Endothelial cell of umbilical vein (primary cell): ENCODE measurements at regions of chr2 and their contacts with region 1.

Region 1: GRCh38 chr2:112584134-112584890 is at the start of gene CHCHD5:
- DNase-seq: peak; percentile 94
- H3K4me3 ChIP-seq: peak within 1 kb of the TSS; percentile 1 to 78 (median 61)
- H3K27ac ChIP-seq: peak within 1 kb of the TSS; percentile 76
- H3K4me1 ChIP-seq: peaks cover 14% of the 10 kb centered on the region
- H3K27me3 ChIP-seq: no peaks in the 10 kb centered on the region
- CTCF ChIP-seq: no peak
- POLR2A ChIP-seq: peak; percentile 96
- total RNA-seq, gene CHCHD5: 22.2 and 23.6 TPM in 2 replicates

Region 2: GRCh38 chr2:111667542-111668273 is 916.6 kb before region 1 on chr2:
- CTCF ChIA-PET with region 1: no interaction called
- POLR2A ChIA-PET with region 1: no interaction called
- dilution Hi-C with region 1: no loop called
- intact Hi-C with region 1: no loop called
- DNase-seq: peak; percentile 73
- H3K4me3 ChIP-seq: no peak overlapping the region
- H3K27ac ChIP-seq: no peak overlapping the region
- H3K4me1 ChIP-seq: peaks cover 3% of the 10 kb centered on the region
- H3K27me3 ChIP-seq: no peaks in the 10 kb centered on the region
- CTCF ChIP-seq: peak; percentile 37 to 58
- POLR2A ChIP-seq: no peak

Region 3: GRCh38 chr2:111883661-111884591 is 700.4 kb before region 1 on chr2 and contains the start of gene ANAPC1:
- CTCF ChIA-PET with region 1: no interaction called
- POLR2A ChIA-PET with region 1: no interaction called
- dilution Hi-C with region 1: no loop called
- intact Hi-C with region 1: loop called (anchors 5 kb)
- DNase-seq: peak; percentile 87
- H3K4me3 ChIP-seq: peak within 1 kb of the TSS; percentile 90 to 97 (median 96)
- H3K27ac ChIP-seq: peak within 1 kb of the TSS; percentile 66
- H3K4me1 ChIP-seq: peaks cover 7% of the 10 kb centered on the region
- H3K27me3 ChIP-seq: no peaks in the 10 kb centered on the region
- CTCF ChIP-seq: no peak
- POLR2A ChIP-seq: peak; percentile 96
- total RNA-seq, gene ANAPC1: 58.3 and 61.5 TPM in 2 replicates

Region 4: DNA sequence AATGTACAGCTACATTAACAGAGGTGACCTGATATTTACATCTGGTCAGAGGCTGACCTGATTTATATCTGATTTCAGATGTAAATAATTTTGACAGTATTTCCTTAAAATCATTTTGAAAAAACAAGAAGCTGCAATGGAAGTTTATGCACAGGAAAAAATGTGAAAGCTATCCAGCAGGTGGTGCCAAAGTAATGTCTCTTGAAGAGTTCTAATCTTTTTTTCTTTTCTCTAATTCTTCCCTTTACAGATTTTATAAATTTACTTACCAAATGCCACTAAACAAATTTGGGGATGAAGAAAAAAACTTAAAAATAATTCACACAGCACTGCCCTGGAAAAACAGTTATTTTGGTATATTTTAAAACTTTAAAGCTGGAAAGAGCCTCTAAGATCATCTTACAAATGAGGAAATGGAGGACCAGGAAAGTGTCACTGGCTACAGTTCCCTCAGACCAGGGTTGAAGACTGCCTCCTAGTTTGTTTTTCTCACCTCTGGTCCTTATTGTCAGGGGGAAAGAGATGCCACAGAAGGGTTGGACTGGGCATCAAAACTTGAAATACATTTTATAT is 462.5 kb before region 1 on chr2:
- CTCF ChIA-PET with region 1: interaction called, 3 read pairs
- POLR2A ChIA-PET with region 1: no interaction called
- dilution Hi-C with region 1: no loop called
- intact Hi-C with region 1: loop called (anchors 5 kb)
- DNase-seq: peak; percentile 77
- H3K4me3 ChIP-seq: no peak overlapping the region
- H3K27ac ChIP-seq: no peak overlapping the region
- H3K4me1 ChIP-seq: no peaks in the 10 kb centered on the region
- H3K27me3 ChIP-seq: no peaks in the 10 kb centered on the region
- CTCF ChIP-seq: peak; percentile 30 to 49
- POLR2A ChIP-seq: no peak

Region 5: GRCh38 chr2:112481050-112481527 is 103.2 kb before region 1 on chr2:
- CTCF ChIA-PET with region 1: interaction called, 5 read pairs
- POLR2A ChIA-PET with region 1: no interaction called
- dilution Hi-C with region 1: no loop called
- intact Hi-C with region 1: loop called (anchors 1 kb)
- DNase-seq: peak; percentile 85
- H3K4me3 ChIP-seq: peak overlapping the region; percentile 49 to 90 (median 61)
- H3K27ac ChIP-seq: peak overlapping the region; percentile 45
- H3K4me1 ChIP-seq: peaks cover 10% of the 10 kb centered on the region
- H3K27me3 ChIP-seq: no peaks in the 10 kb centered on the region
- CTCF ChIP-seq: peak; percentile 80 to 92
- POLR2A ChIP-seq: no peak

Region 6: GRCh38 chr2:112493858-112494648 is 90.3 kb before region 1 on chr2:
- CTCF ChIA-PET with region 1: no interaction called
- POLR2A ChIA-PET with region 1: no interaction called
- dilution Hi-C with region 1: no loop called
- intact Hi-C with region 1: no loop called
- DNase-seq: peak; percentile 28
- H3K4me3 ChIP-seq: no peak overlapping the region
- H3K27ac ChIP-seq: no peak overlapping the region
- H3K4me1 ChIP-seq: peaks cover 19% of the 10 kb centered on the region
- H3K27me3 ChIP-seq: no peaks in the 10 kb centered on the region
- CTCF ChIP-seq: no peak
- POLR2A ChIP-seq: no peak

Region 7: DNA sequence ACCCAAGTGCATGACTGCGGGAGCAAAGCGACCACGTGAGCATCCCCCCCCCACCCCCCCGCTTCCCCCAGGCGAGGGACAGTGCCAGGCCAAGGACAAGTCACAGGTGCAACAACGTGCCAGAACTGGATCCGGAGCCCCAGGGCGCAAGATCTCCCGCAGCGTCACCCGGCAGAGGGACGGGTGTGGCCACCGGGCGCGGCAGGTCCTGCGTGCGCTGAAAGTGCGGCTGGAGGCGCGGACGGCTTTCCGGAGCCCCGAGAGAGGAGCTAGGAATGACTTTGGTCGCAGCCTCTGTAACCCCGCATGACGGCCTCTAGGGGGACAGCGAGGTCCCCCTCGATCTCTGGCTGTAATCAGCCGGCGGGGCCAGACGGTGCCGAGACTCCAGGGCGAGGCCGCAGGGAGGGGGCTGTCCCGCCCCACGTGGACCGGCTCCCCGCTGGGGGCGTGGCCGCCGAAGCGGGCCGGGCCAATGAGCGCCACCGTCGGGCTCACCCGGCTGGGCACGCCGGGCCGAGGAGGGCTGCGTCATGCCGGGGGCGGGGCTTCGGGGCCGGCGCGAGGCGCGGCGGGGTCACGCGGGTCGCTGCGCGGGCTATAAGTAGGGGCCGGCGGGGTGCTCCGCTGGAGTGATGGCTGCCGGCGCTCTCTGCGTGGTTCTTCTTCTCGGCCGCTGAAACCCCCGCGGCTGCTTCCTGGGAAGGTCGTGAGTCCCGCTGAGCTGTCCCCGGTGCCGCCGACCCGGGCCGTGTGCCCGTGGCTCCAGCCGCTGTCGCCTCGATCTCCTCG is 61.2 kb after region 1 on chr2 and contains the start of gene SLC20A1:
- CTCF ChIA-PET with region 1: no interaction called
- POLR2A ChIA-PET with region 1: interaction called, 3 read pairs
- dilution Hi-C with region 1: no loop called
- intact Hi-C with region 1: loop called (anchors 1 kb)
- DNase-seq: peak; percentile 91
- H3K4me3 ChIP-seq: peak within 1 kb of the TSS; percentile 84 to 90 (median 89)
- H3K27ac ChIP-seq: peak within 1 kb of the TSS; percentile 90
- H3K4me1 ChIP-seq: peaks cover 71% of the 10 kb centered on the region
- H3K27me3 ChIP-seq: no peaks in the 10 kb centered on the region
- CTCF ChIP-seq: peak; percentile 38 to 40
- POLR2A ChIP-seq: peak; percentile 98
- total RNA-seq, gene SLC20A1: 141 and 149 TPM in 2 replicates

Region 8: GRCh38 chr2:112692496-112692911 is 108.2 kb after region 1 on chr2:
- CTCF ChIA-PET with region 1: no interaction called
- POLR2A ChIA-PET with region 1: no interaction called
- dilution Hi-C with region 1: no loop called
- intact Hi-C with region 1: loop called (anchors 1 kb)
- DNase-seq: peak; percentile 73
- H3K4me3 ChIP-seq: no peak overlapping the region
- H3K27ac ChIP-seq: peak overlapping the region; percentile 72
- H3K4me1 ChIP-seq: peaks cover 41% of the 10 kb centered on the region
- H3K27me3 ChIP-seq: no peaks in the 10 kb centered on the region
- CTCF ChIP-seq: no peak
- POLR2A ChIP-seq: no peak